Activated T-helper 2 cell treated with anti-CD3 and anti-CD28 coated beads, Interferon-gamma antibody, Interleukin-2, Interleukin-4, amounts not matched to agents 10 μg/mL and 5 μg/mL and 100 μg/mL, durations not matched to agents 14 hours and 24 hours and 36 hours (primary cell): ENCODE measurements at regions of chr2 and their contacts with region 1.

Region 1: GRCh38 chr2:199979832-199980628 is 24.6 kb downstream of the MAIP1 start:
- DNase-seq: peak; percentile 62
- H3K4me3 Mint-ChIP-seq: no peak overlapping the region
- H3K27ac Mint-ChIP-seq: no peak overlapping the region
- H3K4me1 Mint-ChIP-seq: peaks cover 20% of the 10 kb centered on the region
- H3K27me3 Mint-ChIP-seq: no peaks in the 10 kb centered on the region

Region 2: GRCh38 chr2:200239216-200239615 is 259.2 kb after region 1 on chr2:
- intact Hi-C with region 1: loop called (anchors 5 kb)
- DNase-seq: no peak
- H3K4me3 Mint-ChIP-seq: no peak overlapping the region
- H3K27ac Mint-ChIP-seq: no peak overlapping the region
- H3K4me1 Mint-ChIP-seq: peaks cover 5% of the 10 kb centered on the region
- H3K27me3 Mint-ChIP-seq: peaks cover 67% of the 10 kb centered on the region

Region 3: DNA sequence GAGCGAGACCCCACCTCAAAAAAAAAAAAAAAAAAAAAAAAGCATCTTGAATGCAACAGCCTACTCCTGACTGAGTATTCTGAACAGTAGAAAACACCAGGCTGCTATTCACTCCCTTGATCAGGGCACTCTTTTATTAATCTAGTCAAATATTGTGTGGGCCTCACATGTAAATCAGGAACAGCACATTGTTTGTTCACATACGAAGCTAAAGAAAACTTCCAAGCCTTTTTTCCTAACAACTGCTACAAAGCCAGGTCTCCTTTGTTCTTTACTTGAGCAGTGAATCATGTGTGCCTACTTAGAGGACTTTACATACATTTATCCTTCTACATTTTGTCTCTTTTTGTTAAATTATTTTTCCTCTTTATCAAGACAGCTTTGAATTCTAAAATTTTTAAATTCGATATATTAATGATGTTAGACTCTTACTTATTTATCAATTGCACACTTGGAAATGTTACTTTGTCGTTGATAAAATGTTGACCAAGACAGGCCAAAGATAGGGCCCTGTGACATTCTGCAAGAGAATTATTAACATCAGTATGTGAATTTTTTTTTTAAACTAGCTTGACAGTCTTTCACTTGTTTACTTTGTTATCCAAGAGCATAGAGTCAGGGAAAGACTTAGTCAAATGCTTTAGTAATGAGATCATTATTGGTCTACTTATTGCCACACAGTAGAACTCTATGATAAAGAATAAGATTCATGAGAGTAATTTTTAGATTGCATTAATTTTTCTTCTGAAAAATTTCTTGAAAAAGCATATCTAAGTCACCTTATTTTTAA is 339.7 kb after region 1 on chr2:
- intact Hi-C with region 1: loop called (anchors 1 kb)
- DNase-seq: no peak
- H3K4me3 Mint-ChIP-seq: no peak overlapping the region
- H3K27ac Mint-ChIP-seq: no peak overlapping the region
- H3K4me1 Mint-ChIP-seq: peaks cover 73% of the 10 kb centered on the region
- H3K27me3 Mint-ChIP-seq: no peaks in the 10 kb centered on the region

Region 4: DNA sequence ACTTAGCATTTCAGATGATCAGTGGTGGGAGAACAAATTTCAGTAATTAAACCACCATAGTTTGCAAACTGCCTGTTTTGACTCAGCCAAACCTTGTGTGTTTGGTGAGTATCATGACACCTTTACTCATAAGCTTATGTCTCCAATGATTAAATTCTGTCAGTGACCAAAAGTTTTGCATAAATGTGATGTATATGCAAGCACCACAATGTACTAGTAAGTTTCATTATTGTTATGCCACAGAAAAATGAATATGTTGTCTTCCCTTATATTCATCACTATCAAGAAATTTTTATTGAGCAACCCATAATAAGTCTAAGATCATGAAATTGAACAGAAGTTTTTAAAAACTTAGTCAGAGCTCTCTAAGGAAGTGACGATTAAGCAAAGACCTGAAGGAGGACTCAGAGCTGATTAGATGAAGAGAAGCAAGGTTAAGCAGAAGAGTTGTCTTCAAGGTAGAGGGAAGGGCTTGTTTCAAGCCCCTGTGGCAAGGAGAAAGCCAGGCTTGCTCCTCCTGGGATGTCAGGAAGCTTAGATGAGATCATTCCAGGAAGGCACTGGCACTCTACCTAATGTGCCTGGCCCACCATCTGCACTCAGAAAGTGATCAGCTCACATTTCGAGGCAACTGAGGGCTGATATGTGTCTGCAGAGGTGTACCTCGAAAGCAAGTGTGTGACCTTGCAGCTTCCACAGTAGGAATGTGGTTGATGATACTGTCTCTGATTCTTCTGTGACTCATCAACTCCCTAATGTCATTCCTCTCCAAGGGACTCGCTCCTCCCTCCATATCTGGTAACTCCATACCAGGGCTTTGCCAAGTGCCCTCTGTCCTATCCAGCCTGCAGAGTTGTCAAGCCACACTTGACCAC is 475.1 kb after region 1 on chr2:
- intact Hi-C with region 1: loop called (anchors 1 kb)
- DNase-seq: no peak
- H3K4me3 Mint-ChIP-seq: no peak overlapping the region
- H3K27ac Mint-ChIP-seq: peak overlapping the region; percentile 61
- H3K4me1 Mint-ChIP-seq: peaks cover 33% of the 10 kb centered on the region
- H3K27me3 Mint-ChIP-seq: no peaks in the 10 kb centered on the region

Region 5: DNA sequence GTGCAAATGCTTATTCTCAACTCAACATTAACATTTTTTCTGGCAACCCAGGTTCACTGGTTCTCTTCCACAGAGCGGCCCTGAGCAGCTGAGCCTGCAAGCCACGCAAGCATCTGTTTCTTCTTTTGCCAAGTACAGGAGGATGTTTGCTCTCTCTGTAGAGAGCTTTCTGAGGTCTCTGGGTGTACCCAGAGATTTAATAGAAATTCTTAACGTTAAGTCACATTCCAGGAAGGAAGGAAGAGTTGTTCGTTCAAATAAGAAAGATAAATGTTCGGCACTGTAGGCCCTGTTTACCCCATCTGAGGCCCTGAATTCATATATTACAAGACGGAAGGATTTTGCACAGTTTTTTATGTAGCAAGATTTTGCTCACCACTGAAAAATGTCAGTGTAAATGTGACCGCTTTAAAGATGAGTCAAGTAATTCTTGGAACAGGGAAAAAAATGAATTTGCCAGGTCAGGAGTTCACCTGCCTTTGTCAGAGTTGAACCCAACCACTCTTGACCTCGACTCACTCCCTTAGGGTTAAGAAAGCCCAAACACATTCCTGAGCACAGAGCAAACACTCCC is 499.7 kb after region 1 on chr2:
- intact Hi-C with region 1: loop called (anchors 2 kb)
- DNase-seq: no peak
- H3K4me3 Mint-ChIP-seq: no peak overlapping the region
- H3K27ac Mint-ChIP-seq: peak overlapping the region; percentile 68
- H3K4me1 Mint-ChIP-seq: peaks cover 12% of the 10 kb centered on the region
- H3K27me3 Mint-ChIP-seq: no peaks in the 10 kb centered on the region

Region 6: GRCh38 chr2:200864176-200864976 is 884.3 kb after region 1 on chr2 and contains the start of gene CLK1:
- intact Hi-C with region 1: loop called (anchors 5 kb)
- DNase-seq: peak; percentile 91
- H3K4me3 Mint-ChIP-seq: peak within 1 kb of the TSS; percentile 93
- H3K27ac Mint-ChIP-seq: peak within 1 kb of the TSS; percentile 94
- H3K4me1 Mint-ChIP-seq: peaks cover 32% of the 10 kb centered on the region
- H3K27me3 Mint-ChIP-seq: no peaks in the 10 kb centered on the region
- total RNA-seq, gene CLK1: 114 and 122 TPM in 2 replicates